Gastrocnemius medialis (tissue), 4 donors: ENCODE measurements at regions of chr7 and their contacts with region 1.

Region 1: GRCh38 chr7:80659120-80660055 is 20.9 kb downstream of the CD36 start:
- DNase-seq: no peak
- ATAC-seq: peak in 1 of 2 donors; percentile 52
- H3K4me3 ChIP-seq: no peak overlapping the region
- H3K27ac ChIP-seq: peak overlapping the region; percentile 32 to 88 (median 72)
- H3K4me1 ChIP-seq: peaks cover 6 to 32% of the 10 kb centered on the region in 2 donors
- H3K27me3 ChIP-seq: no peaks in the 10 kb centered on the region
- CTCF ChIP-seq: peak; percentile 64 to 97 (median 81)
- POLR2A ChIP-seq: no peak

Region 2: GRCh38 chr7:80060218-80060806 is 599.1 kb before region 1 on chr7:
- in situ Hi-C with region 1: loop called in 1 of 4 experiments (anchors 25 kb)
- intact Hi-C with region 1: no loop called
- DNase-seq: no peak
- ATAC-seq: no peak
- H3K4me3 ChIP-seq: no peak overlapping the region
- H3K27ac ChIP-seq: no peak overlapping the region
- H3K4me1 ChIP-seq: no peaks in the 10 kb centered on the region
- H3K27me3 ChIP-seq: no peaks in the 10 kb centered on the region
- CTCF ChIP-seq: peak in 3 of 5 experiments; percentile 34 to 55 (median 48)
- POLR2A ChIP-seq: no peak

Region 3: DNA sequence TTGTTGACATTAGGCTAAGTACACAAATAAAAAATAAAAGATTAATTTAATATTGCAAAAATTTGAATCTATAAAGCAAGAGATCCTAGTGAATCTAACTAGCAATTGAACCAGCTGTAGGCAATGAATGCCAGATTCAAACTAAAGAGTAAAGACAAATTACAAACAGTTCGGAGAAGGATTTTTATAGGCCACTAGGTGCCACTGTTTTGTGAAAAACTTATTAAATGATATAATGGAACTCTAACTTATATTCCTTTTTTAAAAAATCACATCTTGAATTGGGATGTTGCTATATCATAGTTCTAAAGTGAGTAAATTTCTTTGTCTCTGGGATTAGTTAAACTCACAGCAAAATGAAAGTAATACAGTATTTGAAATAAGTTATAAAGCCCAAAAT is 563.8 kb before region 1 on chr7:
- in situ Hi-C with region 1: loop called in 1 of 4 experiments (anchors 25 kb)
- intact Hi-C with region 1: no loop called
- DNase-seq: no peak
- ATAC-seq: no peak
- H3K4me3 ChIP-seq: no peak overlapping the region
- H3K27ac ChIP-seq: no peak overlapping the region
- H3K4me1 ChIP-seq: no peaks in the 10 kb centered on the region
- H3K27me3 ChIP-seq: no peaks in the 10 kb centered on the region
- CTCF ChIP-seq: peak in 2 of 5 experiments; percentile 28 to 49
- POLR2A ChIP-seq: no peak

Region 4: DNA sequence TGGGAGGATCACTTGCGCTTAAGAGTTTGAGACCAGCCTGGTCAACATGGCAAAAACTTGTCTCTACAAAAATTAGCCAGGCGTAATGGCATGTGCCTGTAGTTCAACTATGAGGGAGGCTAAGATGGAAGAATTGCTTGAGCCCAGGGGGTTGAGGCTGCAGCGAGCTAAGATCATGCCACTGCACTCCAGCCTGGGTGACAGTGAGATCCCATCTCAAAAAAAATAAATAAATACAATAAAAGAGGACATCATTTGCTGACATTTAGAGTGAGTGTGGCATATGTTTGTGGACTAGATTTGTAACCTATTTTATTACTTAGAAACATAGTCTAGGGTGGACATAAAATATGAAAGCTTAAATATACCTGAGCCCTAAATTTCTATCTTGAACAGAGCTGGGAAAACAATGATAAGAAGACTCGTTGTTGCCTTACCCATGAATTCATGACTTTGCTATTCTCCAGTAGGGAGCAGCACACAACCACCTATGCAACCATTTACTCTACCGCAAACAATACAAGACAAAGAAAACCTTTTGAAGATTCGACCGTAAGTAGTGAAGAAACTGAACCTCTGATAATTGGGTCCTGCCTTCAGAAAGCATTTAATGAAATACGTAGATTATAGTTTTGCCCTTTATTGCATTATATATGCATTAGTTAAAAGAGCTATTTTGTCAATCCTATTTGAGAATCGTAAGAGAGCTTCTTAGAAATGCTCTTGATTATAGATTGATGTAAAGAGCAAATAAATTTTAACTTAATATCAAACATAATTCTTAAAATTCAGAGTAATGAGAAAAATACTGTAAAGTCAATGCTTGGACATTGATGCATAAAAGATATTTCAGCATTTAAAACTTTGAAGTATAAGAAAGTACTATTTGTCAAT is 231.0 kb before region 1 on chr7:
- in situ Hi-C with region 1: loop called (anchors 5 kb)
- intact Hi-C with region 1: loop called (anchors 1 kb)
- DNase-seq: peak in 1 of 2 donors; percentile 33
- ATAC-seq: peak; percentile 95 to 97
- H3K4me3 ChIP-seq: peak overlapping the region in 1 of 4 donors; percentile 7
- H3K27ac ChIP-seq: no peak overlapping the region
- H3K4me1 ChIP-seq: no peaks in the 10 kb centered on the region
- H3K27me3 ChIP-seq: no peaks in the 10 kb centered on the region
- CTCF ChIP-seq: peak; percentile 65 to 85 (median 74)
- POLR2A ChIP-seq: no peak

Region 5: DNA sequence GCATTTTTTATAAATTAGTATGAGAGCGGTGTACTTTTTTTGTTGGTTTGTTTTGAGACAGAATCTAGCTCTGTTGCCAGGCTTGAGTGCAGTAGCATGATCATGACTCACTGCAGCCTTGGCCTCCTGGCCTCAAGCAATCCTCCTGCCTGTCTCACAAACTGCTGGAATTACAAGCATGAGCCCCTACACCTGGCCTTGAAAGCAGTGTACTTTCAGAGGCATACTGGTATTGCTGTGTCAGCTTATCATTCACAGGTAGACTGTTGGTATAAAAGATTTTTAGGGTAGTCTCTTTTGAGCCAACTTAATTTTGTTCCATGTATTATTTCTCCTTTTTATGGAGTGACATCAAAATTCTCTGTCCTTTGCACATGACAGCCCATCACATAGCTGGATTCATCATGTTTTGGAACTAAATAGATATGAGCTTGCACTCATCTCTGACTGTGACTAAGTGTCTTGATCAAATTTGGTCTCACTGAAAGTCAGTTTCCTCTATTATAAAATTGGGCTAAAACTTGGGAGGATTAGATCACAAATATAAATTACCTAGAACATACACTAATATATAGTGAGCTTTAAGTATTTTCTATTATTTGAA is 159.9 kb before region 1 on chr7:
- in situ Hi-C with region 1: loop called in 1 of 4 experiments (anchors 10 kb)
- intact Hi-C with region 1: no loop called
- DNase-seq: peak; percentile 67 to 78
- ATAC-seq: peak; percentile 92 to 94
- H3K4me3 ChIP-seq: peak overlapping the region in 1 of 4 donors; percentile 3
- H3K27ac ChIP-seq: peak overlapping the region; percentile 79 to 85 (median 82)
- H3K4me1 ChIP-seq: peaks cover 25 to 32% of the 10 kb centered on the region in 2 donors
- H3K27me3 ChIP-seq: no peaks in the 10 kb centered on the region
- CTCF ChIP-seq: no peak
- POLR2A ChIP-seq: no peak

Region 6: GRCh38 chr7:80517282-80517747 is 142.1 kb before region 1 on chr7:
- in situ Hi-C with region 1: no loop called
- intact Hi-C with region 1: loop called (anchors 2 kb)
- DNase-seq: no peak
- ATAC-seq: no peak
- H3K4me3 ChIP-seq: no peak overlapping the region
- H3K27ac ChIP-seq: peak overlapping the region in 2 of 4 donors; percentile 25 to 34
- H3K4me1 ChIP-seq: peaks cover 0 to 12% of the 10 kb centered on the region in 2 donors
- H3K27me3 ChIP-seq: no peaks in the 10 kb centered on the region
- CTCF ChIP-seq: no peak
- POLR2A ChIP-seq: no peak

Region 7: GRCh38 chr7:80634505-80634904 is 24.9 kb before region 1 on chr7:
- in situ Hi-C with region 1: no loop called
- intact Hi-C with region 1: no loop called
- DNase-seq: no peak
- ATAC-seq: peak; percentile 80 to 86
- H3K4me3 ChIP-seq: no peak overlapping the region
- H3K27ac ChIP-seq: peak overlapping the region; percentile 82 to 92 (median 86)
- H3K4me1 ChIP-seq: peaks cover 62 to 68% of the 10 kb centered on the region in 2 donors
- H3K27me3 ChIP-seq: no peaks in the 10 kb centered on the region
- CTCF ChIP-seq: no peak
- POLR2A ChIP-seq: no peak